Left cardiac atrium (tissue), 4 donors: ENCODE measurements at regions of chr2 and their contacts with region 1.

Region 1: GRCh38 chr2:134897932-134898331 is 20.7 kb upstream of the CCNT2 start:
- DNase-seq: no peak
- ATAC-seq: no peak

Region 2: GRCh38 chr2:134460583-134460998 is 437.3 kb before region 1 on chr2:
- intact Hi-C with region 1: loop called (anchors 5 kb)
- DNase-seq: peak; percentile 60
- ATAC-seq: peak; percentile 77 to 82

Region 3: DNA sequence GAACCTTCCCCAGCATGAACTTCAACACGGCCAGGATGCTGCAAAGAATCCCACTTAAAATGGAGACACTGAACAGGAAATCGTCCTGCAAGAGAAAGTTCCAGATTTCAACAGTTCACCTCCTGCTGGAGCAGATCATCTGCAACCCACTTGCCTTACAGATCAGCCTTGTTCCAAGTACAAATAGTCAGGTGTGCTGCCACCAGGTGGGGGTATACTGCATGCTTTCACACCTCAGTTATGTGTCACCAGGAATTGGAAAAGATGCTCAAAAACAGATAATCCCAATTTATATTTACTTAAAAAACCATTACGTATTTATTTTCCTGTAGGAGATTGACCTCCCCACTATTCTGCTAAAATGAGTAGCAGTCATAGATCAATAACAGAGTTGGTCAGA is 431.8 kb before region 1 on chr2:
- intact Hi-C with region 1: loop called (anchors 5 kb)
- DNase-seq: no peak
- ATAC-seq: no peak

Region 4: DNA sequence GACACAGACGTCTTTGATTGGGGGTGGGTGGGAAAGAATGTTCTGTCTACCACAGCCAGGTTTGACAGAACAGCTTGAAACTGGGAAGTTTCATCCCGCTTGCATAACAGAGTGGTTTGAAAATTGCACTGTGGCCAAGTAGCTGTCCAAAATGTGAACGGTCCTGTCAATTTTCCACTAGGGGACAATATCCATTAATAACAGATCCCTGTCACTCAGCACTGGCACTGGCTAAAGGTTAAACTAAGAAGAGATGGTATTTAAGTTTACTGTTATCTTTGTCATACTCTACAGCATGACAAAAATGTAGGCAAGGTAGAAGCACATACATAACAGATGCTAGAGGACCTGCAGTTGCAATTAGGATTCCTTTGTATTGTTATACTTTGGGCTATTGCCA is 115.1 kb before region 1 on chr2:
- intact Hi-C with region 1: loop called in 1 of 2 experiments (anchors 10 kb)
- DNase-seq: no peak
- ATAC-seq: peak in 1 of 2 donors; percentile 56